ENCODE measurements at regions of chr16 and their contacts with region 1.

Region 1: GRCh38 chr16:75464130-75464918 is at the start of gene TMEM170A:
- DNase-seq: peak; percentile 98
- H3K4me3 ChIP-seq: peak within 1 kb of the TSS; percentile 84
- H3K27ac ChIP-seq: peak within 1 kb of the TSS; percentile 87
- H3K27me3 ChIP-seq: no peaks in the 10 kb centered on the region
- CTCF ChIP-seq: peak; percentile 100
- polyA plus RNA-seq, gene TMEM170A: 8.0 and 13.3 TPM in 2 replicates

Region 2: GRCh38 chr16:75415169-75415905 is 49.0 kb before region 1 on chr16:
- CTCF ChIA-PET with region 1: interaction called, 10 read pairs
- POLR2A ChIA-PET with region 1: no interaction called
- DNase-seq: no peak
- H3K4me3 ChIP-seq: no peak overlapping the region
- H3K27ac ChIP-seq: peak overlapping the region; percentile 61
- H3K27me3 ChIP-seq: no peaks in the 10 kb centered on the region
- CTCF ChIP-seq: no peak

Region 3: DNA sequence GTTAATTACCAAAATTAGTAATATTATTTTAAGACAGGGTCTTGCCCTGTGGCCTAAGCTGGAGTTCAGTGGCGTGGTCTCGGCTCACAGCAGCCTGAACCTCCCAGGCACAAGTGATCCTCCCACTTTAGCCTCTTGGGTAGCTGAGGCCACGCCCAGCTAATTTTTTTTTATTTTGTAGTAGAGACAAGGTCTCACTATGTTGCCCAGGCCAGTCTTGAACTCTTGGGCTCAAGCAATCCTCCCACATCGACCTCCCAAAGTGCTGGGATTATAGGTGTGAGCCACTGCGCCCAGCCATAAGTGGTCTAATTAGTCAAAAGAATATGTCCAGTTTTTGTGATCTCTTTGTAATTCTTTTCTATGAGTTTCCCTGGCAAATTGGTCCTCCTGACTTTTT is 19.0 kb before region 1 on chr16:
- CTCF ChIA-PET with region 1: interaction called, 17 read pairs
- POLR2A ChIA-PET with region 1: no interaction called
- DNase-seq: no peak
- H3K4me3 ChIP-seq: no peak overlapping the region
- H3K27ac ChIP-seq: no peak overlapping the region
- H3K27me3 ChIP-seq: no peaks in the 10 kb centered on the region
- CTCF ChIP-seq: no peak

Region 4: GRCh38 chr16:75478074-75478473 is 13.8 kb after region 1 on chr16:
- CTCF ChIA-PET with region 1: interaction called, 15 read pairs
- POLR2A ChIA-PET with region 1: no interaction called
- DNase-seq: no peak
- H3K4me3 ChIP-seq: no peak overlapping the region
- H3K27ac ChIP-seq: no peak overlapping the region
- H3K27me3 ChIP-seq: peaks cover 4% of the 10 kb centered on the region
- CTCF ChIP-seq: no peak

Region 5: DNA sequence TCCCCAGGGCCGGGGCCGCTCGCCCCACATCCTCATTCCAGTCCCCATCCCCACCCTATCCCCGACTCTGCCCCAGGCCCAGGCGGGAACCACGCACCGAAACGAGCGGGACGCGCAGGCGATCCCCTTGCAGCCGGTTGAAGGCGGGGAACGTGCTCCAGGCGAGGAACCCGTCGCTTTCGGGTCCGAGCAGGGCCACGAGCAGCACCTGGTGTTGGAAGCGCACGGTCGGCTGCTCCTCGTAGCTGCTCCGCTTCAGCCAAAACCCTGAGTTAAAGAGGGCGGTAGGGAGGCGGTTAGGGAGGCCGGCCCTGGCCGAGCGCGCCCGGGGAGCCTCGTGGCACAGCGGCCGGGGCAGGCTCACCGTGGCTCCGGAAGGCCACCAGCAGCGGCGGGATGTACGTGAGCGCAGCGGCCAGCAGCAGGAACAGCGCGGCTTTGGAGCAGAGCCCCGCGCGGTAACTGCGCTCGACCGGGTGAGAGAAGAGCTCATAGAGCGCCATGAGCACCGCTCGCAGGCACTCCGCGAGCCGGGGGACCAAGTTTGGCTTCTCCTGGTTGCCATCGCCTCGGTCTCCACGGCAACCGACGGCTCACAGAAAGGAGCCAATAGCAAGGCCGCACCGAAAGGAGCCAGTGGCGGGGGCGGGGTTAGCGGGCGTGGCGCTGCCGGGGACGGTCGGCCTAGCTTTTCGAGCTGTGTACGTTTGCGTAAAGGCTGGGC is 91.5 kb after region 1 on chr16 and contains the start of gene TMEM231:
- CTCF ChIA-PET with region 1: interaction called, 53 read pairs
- POLR2A ChIA-PET with region 1: no interaction called
- DNase-seq: peak; percentile 51
- H3K4me3 ChIP-seq: peak within 1 kb of the TSS; percentile 76
- H3K27ac ChIP-seq: peak within 1 kb of the TSS; percentile 39
- H3K27me3 ChIP-seq: no peaks in the 10 kb centered on the region
- CTCF ChIP-seq: 0 out of 2 replicates have a peak, but pooled peaks have one; percentile 8
- polyA plus RNA-seq, gene TMEM231: 10.6 and 16.7 TPM in 2 replicates

Region 6: DNA sequence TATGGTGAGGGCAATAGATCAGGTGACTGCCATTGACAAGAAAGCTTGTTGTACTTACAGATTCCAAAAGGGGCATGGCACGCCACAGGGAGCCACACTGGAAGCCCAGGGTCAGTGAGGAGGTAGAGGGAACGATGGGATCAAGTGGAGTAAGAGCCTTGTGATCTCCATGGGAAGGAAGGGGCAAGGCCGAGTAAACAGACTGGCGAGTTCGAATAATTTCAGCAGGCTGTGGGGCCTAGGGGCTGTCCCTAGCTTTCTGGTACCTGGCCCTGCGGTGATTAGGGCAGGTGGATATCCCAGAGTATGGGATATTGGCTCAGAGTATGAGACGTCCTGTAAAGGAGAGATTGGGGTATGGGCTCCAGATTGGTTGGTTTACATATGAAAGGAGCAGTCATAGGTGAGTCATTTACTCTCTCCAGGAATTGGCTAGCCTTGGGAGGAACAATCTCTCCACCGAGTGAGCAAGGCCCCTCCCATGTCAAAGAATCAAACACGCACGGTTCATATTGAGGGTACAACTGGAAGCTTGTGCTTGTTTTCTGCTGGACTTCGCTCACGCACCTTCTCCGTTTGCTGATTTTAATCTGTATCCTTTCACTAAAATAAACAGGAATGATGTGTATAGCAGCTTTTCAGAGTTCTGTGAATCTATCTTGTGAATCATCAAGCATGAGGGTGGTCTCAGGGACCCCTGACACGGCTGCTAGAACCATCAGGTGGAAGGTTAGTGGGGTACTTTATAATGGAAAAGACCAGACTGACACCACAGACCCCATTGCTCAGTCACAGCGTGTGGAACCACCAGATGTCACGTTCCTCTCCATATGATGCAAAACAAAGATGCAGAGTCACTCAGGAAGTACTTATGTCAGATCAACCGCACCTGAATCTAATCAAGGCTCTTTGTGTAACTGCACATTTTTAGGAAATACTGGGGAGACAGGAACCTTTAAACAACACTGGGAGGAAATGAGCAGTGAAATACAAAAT is 129.8 kb after region 1 on chr16:
- CTCF ChIA-PET with region 1: interaction called, 11 read pairs
- POLR2A ChIA-PET with region 1: no interaction called
- DNase-seq: no peak
- H3K4me3 ChIP-seq: no peak overlapping the region
- H3K27ac ChIP-seq: peak overlapping the region; percentile 43
- H3K27me3 ChIP-seq: no peaks in the 10 kb centered on the region
- CTCF ChIP-seq: no peak

Region 7: DNA sequence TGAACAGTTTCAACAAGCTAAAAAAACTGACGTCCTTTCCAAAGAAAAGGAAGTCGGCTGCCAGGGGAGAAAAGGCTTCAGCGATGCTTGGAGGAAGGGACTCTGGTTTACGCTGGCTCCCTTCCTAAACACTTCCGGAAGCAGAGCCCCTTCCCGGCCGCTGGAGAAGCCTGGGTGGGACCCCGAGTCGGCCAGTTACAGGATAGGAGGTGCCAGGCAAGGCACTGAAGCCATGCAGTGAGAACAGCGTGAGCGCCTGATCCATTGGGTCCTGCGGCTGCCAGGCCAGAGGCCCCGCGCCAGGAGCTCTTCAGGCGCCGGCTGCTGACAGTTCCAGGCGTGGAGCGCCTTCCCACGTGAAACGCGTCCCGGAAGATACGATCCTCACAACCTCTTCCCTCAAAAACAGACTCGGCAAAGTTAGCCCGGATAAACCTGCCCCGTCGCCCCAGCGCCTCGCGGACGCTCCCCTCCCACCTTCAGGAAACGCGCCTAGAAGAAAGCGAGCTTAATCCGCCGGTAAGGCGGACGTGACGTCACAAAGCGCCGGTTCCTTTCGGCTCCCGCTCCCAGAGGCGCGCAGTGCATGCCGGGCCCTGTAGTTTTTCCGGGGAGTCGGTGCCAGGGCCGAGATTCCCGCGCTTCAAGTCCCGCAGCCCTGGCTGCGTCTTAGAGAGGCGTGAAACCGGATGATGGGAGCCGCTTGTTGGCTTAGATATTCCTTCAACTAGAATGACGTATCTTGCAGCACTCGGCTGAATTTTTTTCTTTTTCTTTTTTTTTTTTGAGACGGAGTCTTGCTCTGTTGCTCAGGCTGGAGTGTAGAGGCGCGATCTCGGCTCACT is 158.7 kb after region 1 on chr16 and contains the start of gene ADAT1:
- CTCF ChIA-PET with region 1: interaction called, 19 read pairs
- POLR2A ChIA-PET with region 1: no interaction called
- DNase-seq: peak; percentile 94
- H3K4me3 ChIP-seq: peak within 1 kb of the TSS; percentile 85
- H3K27ac ChIP-seq: peak within 1 kb of the TSS; percentile 79
- H3K27me3 ChIP-seq: no peaks in the 10 kb centered on the region
- CTCF ChIP-seq: no peak
- polyA plus RNA-seq, gene ADAT1: 32.2 and 32.5 TPM in 2 replicates